Naive thymus-derived CD4-positive, alpha-beta T cell (primary cell): ENCODE measurements at regions of chrX and their contacts with region 1.

Region 1: DNA sequence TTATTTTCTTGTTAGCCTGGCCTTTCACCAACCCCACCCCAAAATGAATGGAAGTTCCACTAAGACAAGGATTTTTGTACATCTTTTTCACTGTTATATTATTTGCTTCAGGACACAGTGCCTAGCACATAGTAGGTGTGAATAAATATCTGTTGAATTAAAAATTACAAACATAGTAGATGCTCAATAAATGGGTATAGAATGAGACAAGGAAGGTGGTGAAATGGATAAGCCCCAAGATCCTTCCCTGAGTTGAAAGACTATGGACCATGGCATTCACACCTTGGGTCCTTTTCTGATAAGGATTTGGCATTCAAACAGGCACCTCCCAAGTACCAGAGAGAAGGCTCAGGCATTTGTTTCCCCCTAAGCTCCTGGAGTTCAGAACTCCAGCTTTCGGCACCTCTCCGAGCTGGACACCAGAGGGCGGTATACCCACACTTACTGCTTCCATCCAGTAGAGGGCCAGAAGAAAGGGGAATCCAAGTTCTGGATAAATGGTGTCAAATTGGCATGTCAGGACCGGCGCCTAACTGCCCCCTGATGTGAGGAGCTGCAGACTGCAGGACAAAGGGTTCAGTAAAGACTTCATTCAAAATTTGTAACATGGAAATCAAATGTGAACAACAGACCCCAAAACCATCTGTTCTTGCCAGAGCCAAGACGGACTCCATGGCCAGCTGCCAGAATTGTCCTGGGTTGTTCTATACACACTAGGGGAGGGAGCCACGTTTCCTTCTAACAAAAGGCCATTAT is 193.0 kb downstream of the GPC3 start:
- DNase-seq: peak; percentile 22 to 71 (median 54)
- ATAC-seq: peak; percentile 87
- H3K4me3 ChIP-seq: no peak overlapping the region
- H3K4me3 Mint-ChIP-seq: no peak overlapping the region
- H3K27ac ChIP-seq: no peak overlapping the region
- H3K27ac Mint-ChIP-seq: no peak overlapping the region
- H3K4me1 ChIP-seq: no peaks in the 10 kb centered on the region
- H3K4me1 Mint-ChIP-seq: no peaks in the 10 kb centered on the region
- H3K27me3 ChIP-seq: no peaks in the 10 kb centered on the region
- H3K27me3 Mint-ChIP-seq: peaks cover 0 to 3% (median 0%) of the 10 kb centered on the region in 5 donors

Region 2: DNA sequence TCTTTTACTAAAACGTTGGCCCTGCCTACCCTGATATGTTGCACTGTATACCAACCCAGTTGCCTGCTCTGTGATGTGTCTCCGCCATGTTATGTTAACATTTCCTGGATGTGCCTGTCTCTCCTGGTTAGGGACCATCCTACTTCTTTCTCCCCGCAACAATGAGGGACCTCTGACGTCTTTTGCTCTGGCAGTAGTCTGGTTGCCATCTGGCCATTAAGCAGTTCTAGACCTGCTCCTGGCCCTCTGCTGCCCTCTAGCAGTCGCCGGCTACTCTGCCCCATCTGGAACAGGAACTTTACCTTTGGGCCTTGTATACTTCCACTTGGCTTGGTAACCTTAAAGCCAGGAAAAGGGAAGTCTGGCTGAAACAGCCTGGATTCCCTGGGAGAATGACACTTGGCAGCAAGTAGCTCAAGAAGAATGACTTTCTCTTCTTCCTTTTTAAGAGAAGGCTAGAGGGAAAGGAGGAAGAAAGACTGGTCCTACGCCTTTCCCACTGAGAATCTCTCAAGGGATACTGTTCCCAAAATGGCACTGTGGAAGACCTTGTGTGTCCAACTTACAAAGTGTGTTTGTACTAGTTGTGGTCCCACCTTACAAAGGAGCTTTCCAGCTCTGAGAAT is 129.5 kb after region 1 on chrX:
- CTCF ChIA-PET with region 1: no interaction called
- POLR2A ChIA-PET with region 1: no interaction called
- intact Hi-C with region 1: loop called (anchors 1 to 5 kb)
- DNase-seq: peak in 5 of 9 donors; percentile 7 to 33 (median 22)
- ATAC-seq: no peak
- H3K4me3 ChIP-seq: peak overlapping the region; percentile 24
- H3K4me3 Mint-ChIP-seq: peak overlapping the region in 5 of 10 donors; percentile 7 to 90 (median 83)
- H3K27ac ChIP-seq: no peak overlapping the region
- H3K27ac Mint-ChIP-seq: peak overlapping the region in 7 of 9 donors; percentile 38 to 95 (median 92)
- H3K4me1 ChIP-seq: peaks cover 13 to 17% of the 10 kb centered on the region in 2 donors
- H3K4me1 Mint-ChIP-seq: peaks cover 4 to 39% (median 26%) of the 10 kb centered on the region in 7 donors
- H3K27me3 ChIP-seq: no peaks in the 10 kb centered on the region
- H3K27me3 Mint-ChIP-seq: no peaks in the 10 kb centered on the region

Region 3: DNA sequence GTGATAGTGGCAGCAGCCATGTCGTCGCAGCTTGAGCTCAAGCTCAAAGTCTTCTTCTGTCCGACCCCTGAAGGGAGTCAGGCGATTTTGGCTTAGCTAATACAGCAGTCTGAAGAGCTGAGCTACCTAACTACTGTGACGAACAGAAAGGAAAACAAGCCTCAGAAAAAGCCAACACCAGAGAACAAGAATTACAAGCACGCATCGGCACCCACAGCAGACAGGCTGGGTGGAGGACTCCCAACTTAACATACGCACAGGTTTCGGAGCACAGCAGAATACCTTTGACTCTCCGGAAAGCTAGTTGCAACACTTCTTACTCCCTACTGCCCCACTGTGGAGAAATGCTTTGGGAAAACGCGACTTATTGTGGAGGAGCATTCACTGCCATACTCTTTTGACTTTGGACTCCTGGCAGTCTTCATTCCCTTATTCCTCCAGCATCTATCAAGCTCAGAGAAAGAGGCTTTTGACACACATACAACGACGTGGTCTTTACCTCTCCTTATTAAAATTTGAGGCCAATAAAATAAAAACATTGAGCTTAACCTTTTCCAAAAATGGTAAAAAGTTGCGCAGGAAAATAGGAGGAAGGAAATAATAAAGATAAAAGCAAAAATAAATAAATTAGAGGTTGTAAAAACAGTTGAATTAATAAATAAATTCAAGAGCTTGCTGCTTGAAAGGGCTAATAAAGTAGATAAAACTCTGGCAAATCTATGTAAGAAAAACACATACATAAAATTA is 234.4 kb after region 1 on chrX:
- CTCF ChIA-PET with region 1: interaction called, 20 read pairs
- POLR2A ChIA-PET with region 1: no interaction called
- intact Hi-C with region 1: loop called (anchors 1 kb)
- DNase-seq: peak in 8 of 9 donors; percentile 8 to 51 (median 38)
- ATAC-seq: peak; percentile 65
- H3K4me3 ChIP-seq: no peak overlapping the region
- H3K4me3 Mint-ChIP-seq: peak overlapping the region; percentile 38 to 76 (median 56)
- H3K27ac ChIP-seq: no peak overlapping the region
- H3K27ac Mint-ChIP-seq: peak overlapping the region in 1 of 9 donors; percentile 13
- H3K4me1 ChIP-seq: no peaks in the 10 kb centered on the region
- H3K4me1 Mint-ChIP-seq: peaks cover 0 to 14% (median 10%) of the 10 kb centered on the region in 7 donors
- H3K27me3 ChIP-seq: no peaks in the 10 kb centered on the region
- H3K27me3 Mint-ChIP-seq: peaks cover 0 to 3% (median 0%) of the 10 kb centered on the region in 5 donors

Region 4: GRCh38 chrX:134254511-134254910 is 462.1 kb after region 1 on chrX:
- CTCF ChIA-PET with region 1: no interaction called
- POLR2A ChIA-PET with region 1: no interaction called
- intact Hi-C with region 1: loop called (anchors 1 kb)
- DNase-seq: no peak
- ATAC-seq: no peak
- H3K4me3 ChIP-seq: no peak overlapping the region
- H3K4me3 Mint-ChIP-seq: no peak overlapping the region
- H3K27ac ChIP-seq: no peak overlapping the region
- H3K27ac Mint-ChIP-seq: peak overlapping the region in 1 of 9 donors; percentile 1
- H3K4me1 ChIP-seq: no peaks in the 10 kb centered on the region
- H3K4me1 Mint-ChIP-seq: peaks cover 0 to 9% (median 0%) of the 10 kb centered on the region in 7 donors
- H3K27me3 ChIP-seq: no peaks in the 10 kb centered on the region
- H3K27me3 Mint-ChIP-seq: peaks cover 0 to 4% (median 0%) of the 10 kb centered on the region in 5 donors